Posterior cingulate gyrus (tissue), 11 donors: ENCODE measurements at regions of chr17 and their contacts with region 1.

Region 1: GRCh38 chr17:42459801-42460281 is 1.2 kb downstream of the ATP6V0A1 start:
- DNase-seq: no peak

Region 2: GRCh38 chr17:42428141-42428944 is 31.5 kb before region 1 on chr17:
- intact Hi-C with region 1: loop called (anchors 1 kb)
- DNase-seq: peak in 7 of 10 donors; percentile 31 to 90 (median 61)

Region 3: GRCh38 chr17:42517516-42517915 is 57.7 kb after region 1 on chr17:
- intact Hi-C with region 1: loop called (anchors 10 kb)
- DNase-seq: peak; percentile 58 to 97 (median 83)